HEK293 (cell line): ENCODE measurements at regions of chr10 and their contacts with region 1.

Region 1: DNA sequence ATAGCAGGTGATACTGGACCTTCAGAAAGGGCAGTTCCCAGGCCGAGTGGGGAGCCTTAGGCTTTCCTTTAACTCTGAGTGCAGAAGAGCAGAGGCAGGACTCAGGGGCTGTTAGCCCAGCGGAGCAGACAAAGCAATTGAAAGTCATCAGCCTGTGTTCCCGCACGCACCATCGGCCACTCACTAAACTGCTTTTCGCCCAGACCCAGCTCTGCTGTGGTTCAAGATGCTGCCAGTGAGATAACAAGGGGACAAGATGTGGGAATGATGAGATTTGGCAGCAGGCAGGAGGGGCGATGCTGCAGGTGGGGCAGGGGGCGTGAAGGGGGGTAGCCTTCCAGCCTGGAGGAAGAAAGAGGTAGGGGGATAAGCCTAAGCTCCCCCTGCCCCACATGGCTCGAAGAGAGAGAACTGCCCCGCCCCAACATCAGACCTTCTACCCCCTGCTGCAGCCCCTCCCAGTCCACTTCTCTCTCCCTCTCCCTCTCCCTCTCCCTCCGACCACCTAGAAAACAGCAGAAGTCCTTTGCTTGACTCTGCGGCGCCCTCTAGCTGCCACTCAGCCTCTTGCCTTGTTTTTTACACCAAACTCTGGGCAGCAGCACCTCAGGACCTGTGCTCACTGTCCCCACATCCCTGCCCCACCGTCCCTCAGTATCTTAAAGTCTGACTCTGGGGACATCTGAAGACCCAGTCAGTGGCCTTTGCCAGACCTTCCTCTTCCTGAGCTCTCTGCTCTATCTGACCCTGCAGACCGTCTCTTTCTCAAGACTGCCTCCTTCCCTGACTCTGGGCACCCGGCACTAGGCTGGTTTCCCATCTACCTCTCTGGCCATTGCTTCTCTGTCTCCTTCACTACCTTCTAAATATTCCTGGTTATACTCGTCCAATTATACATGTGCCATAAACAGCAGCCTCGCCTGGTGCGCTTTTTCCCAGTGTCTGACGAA is 110.5 kb downstream of the C10orf105 start:
- H3K4me3 ChIP-seq: no peak overlapping the region
- H3K27ac ChIP-seq: no peak overlapping the region
- H3K4me1 ChIP-seq: 0 out of 2 replicates have a peak, but pooled peaks cover 2% of the 10 kb centered on the region
- CTCF ChIP-seq: peak; percentile 91

Region 2: DNA sequence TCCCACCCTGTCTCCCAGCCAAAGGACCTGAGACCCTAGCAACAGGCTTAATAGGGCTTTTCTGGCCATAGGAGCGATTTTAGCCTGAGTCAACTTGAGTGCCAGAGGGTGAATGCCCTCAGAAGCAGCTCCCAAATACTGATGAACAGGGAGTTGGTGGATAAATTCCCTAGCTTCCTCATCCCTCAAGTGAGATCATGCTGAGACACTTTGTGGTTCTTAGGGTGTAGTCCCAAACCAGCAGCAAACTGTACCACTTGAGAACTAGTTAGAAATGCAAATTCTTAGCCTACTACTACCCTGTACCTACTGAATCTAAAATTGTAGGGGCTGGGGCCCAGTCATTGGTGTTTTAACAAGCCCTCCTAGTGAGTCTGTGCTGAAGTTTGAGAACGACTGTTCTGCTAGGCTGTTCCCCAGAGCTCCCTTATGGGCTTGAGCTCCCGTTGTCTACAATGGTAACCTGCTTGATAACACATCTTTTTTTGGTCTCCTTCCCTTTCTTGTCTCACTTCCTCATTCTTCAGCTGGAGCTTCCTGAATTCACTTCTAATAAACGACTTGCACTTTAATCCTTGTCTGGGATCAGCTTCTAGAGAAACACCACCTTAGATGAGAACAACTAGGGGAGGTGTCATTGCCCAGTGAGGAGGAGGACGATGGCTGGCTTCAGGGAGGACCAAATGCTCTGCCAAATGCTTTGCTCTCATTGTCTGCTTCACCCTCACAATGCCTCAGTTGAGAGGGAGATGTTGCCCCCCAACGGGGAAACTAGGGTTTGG is 230.6 kb before region 1 on chr10:
- CTCF ChIA-PET with region 1: interaction called, 23 read pairs
- POLR2A ChIA-PET with region 1: no interaction called
- H3K4me3 ChIP-seq: no peak overlapping the region
- H3K27ac ChIP-seq: no peak overlapping the region
- H3K4me1 ChIP-seq: 0 out of 2 replicates have a peak, but pooled peaks cover 2% of the 10 kb centered on the region
- CTCF ChIP-seq: no peak

Region 3: GRCh38 chr10:71569775-71570588 is 39.1 kb before region 1 on chr10:
- CTCF ChIA-PET with region 1: interaction called, 12 read pairs
- POLR2A ChIA-PET with region 1: no interaction called
- H3K4me3 ChIP-seq: no peak overlapping the region
- H3K27ac ChIP-seq: no peak overlapping the region
- H3K4me1 ChIP-seq: no peaks in the 10 kb centered on the region
- CTCF ChIP-seq: peak; percentile 75

Region 4: GRCh38 chr10:71590781-71591350 is 18.2 kb before region 1 on chr10:
- CTCF ChIA-PET with region 1: interaction called, 17 read pairs
- POLR2A ChIA-PET with region 1: no interaction called
- H3K4me3 ChIP-seq: no peak overlapping the region
- H3K27ac ChIP-seq: no peak overlapping the region
- H3K4me1 ChIP-seq: 0 out of 2 replicates have a peak, but pooled peaks cover 3% of the 10 kb centered on the region
- CTCF ChIP-seq: no peak

Region 5: GRCh38 chr10:71623098-71623985 is 14.2 kb after region 1 on chr10:
- CTCF ChIA-PET with region 1: interaction called, 39 read pairs
- POLR2A ChIA-PET with region 1: no interaction called
- H3K4me3 ChIP-seq: no peak overlapping the region
- H3K27ac ChIP-seq: no peak overlapping the region
- H3K4me1 ChIP-seq: no peaks in the 10 kb centered on the region
- CTCF ChIP-seq: no peak

Region 6: GRCh38 chr10:71647526-71648253 is 38.6 kb after region 1 on chr10:
- CTCF ChIA-PET with region 1: interaction called, 15 read pairs
- POLR2A ChIA-PET with region 1: no interaction called
- H3K4me3 ChIP-seq: no peak overlapping the region
- H3K27ac ChIP-seq: no peak overlapping the region
- H3K4me1 ChIP-seq: no peaks in the 10 kb centered on the region
- CTCF ChIP-seq: peak; percentile 42; the same call in 1 of the 2 replicates